Activated CD4-positive, alpha-beta T cell treated with anti-CD3 and anti-CD28 coated beads for 36 hours (primary cell): ENCODE measurements at regions of chr6 and their contacts with region 1.

Region 1: GRCh38 chr6:5143634-5144311 is 58.6 kb downstream of the PPP1R3G start:
- DNase-seq: peak; percentile 91
- ATAC-seq: peak; percentile 71
- H3K4me3 Mint-ChIP-seq: no peak overlapping the region
- H3K27ac Mint-ChIP-seq: no peak overlapping the region
- H3K4me1 Mint-ChIP-seq: no peaks in the 10 kb centered on the region
- H3K27me3 Mint-ChIP-seq: no peaks in the 10 kb centered on the region

Region 2: GRCh38 chr6:5174244-5174643 is 30.5 kb after region 1 on chr6:
- CTCF ChIA-PET with region 1: interaction called, 15 read pairs
- POLR2A ChIA-PET with region 1: interaction called, 3 read pairs
- intact Hi-C with region 1: no loop called
- DNase-seq: peak; percentile 79
- ATAC-seq: peak; percentile 96
- H3K4me3 Mint-ChIP-seq: peak overlapping the region; percentile 57
- H3K27ac Mint-ChIP-seq: peak overlapping the region; percentile 93
- H3K4me1 Mint-ChIP-seq: peaks cover 54% of the 10 kb centered on the region
- H3K27me3 Mint-ChIP-seq: no peaks in the 10 kb centered on the region

Region 3: GRCh38 chr6:5214570-5215052 is 70.8 kb after region 1 on chr6:
- CTCF ChIA-PET with region 1: interaction called, 8 read pairs
- POLR2A ChIA-PET with region 1: no interaction called
- intact Hi-C with region 1: loop called in 1 of 2 experiments (anchors 5 kb)
- DNase-seq: peak; percentile 66
- ATAC-seq: peak; percentile 65
- H3K4me3 Mint-ChIP-seq: no peak overlapping the region
- H3K27ac Mint-ChIP-seq: no peak overlapping the region
- H3K4me1 Mint-ChIP-seq: peaks cover 10% of the 10 kb centered on the region
- H3K27me3 Mint-ChIP-seq: no peaks in the 10 kb centered on the region

Region 4: DNA sequence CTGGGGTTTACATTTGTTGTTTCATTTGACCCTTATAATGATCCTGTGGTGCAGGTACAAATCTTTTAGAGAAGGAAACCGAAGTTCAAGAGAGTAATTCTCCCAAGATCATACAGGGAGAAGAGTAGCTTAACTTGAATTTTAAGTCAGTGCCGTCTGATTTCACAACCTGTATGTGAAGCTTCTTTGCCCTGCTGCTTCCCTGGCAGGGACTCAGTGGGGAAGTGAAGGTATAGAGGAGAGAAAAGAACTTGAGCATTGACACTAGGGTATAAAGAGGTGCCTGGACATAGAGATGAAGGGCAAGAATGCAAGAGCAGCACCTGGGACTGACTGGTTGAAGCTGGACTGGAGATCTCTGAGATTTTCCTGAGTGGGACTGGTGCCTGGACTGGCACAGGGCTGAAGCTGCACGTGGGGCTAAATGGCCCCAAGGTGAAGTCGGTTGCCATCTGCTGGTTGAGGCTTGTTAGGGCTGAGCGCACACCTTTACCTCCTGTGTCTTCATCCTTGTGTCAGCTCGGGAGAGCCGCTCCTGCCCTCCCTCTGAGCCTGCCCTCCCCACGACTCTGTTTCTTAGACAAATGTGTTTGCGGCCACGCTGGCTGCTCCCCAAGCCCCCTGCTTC is 159.3 kb after region 1 on chr6:
- CTCF ChIA-PET with region 1: interaction called, 23 read pairs
- POLR2A ChIA-PET with region 1: no interaction called
- intact Hi-C with region 1: loop called (anchors 1 kb)
- DNase-seq: peak; percentile 78
- ATAC-seq: peak; percentile 68
- H3K4me3 Mint-ChIP-seq: peak overlapping the region; percentile 43
- H3K27ac Mint-ChIP-seq: peak overlapping the region; percentile 84
- H3K4me1 Mint-ChIP-seq: peaks cover 54% of the 10 kb centered on the region
- H3K27me3 Mint-ChIP-seq: no peaks in the 10 kb centered on the region

Region 5: GRCh38 chr6:5379647-5380242 is 236.0 kb after region 1 on chr6:
- CTCF ChIA-PET with region 1: interaction called, 18 read pairs
- POLR2A ChIA-PET with region 1: no interaction called
- intact Hi-C with region 1: loop called (anchors 1 to 5 kb)
- DNase-seq: peak; percentile 59
- ATAC-seq: peak; percentile 33
- H3K4me3 Mint-ChIP-seq: no peak overlapping the region
- H3K27ac Mint-ChIP-seq: no peak overlapping the region
- H3K4me1 Mint-ChIP-seq: peaks cover 3% of the 10 kb centered on the region
- H3K27me3 Mint-ChIP-seq: no peaks in the 10 kb centered on the region